IMR-90 (cell line): ENCODE measurements at regions of chr10 and their contacts with region 1.

Region 1: GRCh38 chr10:31886885-31887284 is 41.7 kb downstream of the ARHGAP12 start:
- DNase-seq: peak; percentile 81
- ATAC-seq: peak; percentile 92
- H3K4me3 ChIP-seq: no peak overlapping the region
- H3K27ac ChIP-seq: no peak overlapping the region
- H3K4me1 ChIP-seq: peaks cover 12% of the 10 kb centered on the region
- H3K27me3 ChIP-seq: no peaks in the 10 kb centered on the region
- CTCF ChIP-seq: no peak
- POLR2A ChIP-seq: no peak
- RAD21 ChIP-seq: no peak

Region 2: DNA sequence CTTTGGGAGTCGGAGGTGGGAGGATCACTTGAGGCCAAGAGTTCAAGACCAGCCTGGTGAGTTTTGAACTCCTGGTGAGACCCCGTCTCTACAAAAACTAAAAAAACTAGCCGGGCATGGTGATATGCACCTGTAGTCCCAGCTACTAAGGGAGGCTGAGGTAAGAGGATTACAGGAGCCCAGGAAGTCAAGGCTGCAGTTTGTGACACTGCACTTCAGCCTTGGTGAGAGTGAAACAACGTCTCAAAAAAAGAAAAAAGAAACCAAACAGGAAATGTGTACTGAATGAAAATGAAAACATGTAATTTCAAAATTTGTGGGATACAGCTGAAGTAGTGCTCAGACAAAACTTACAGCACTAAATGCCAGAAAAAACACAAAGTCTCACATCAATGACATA is 34.1 kb after region 1 on chr10:
- CTCF ChIA-PET with region 1: no interaction called
- POLR2A ChIA-PET with region 1: no interaction called
- dilution Hi-C with region 1: no loop called
- in situ Hi-C with region 1: no loop called
- intact Hi-C with region 1: loop called (anchors 5 kb)
- DNase-seq: no peak
- ATAC-seq: no peak
- H3K4me3 ChIP-seq: no peak overlapping the region
- H3K27ac ChIP-seq: no peak overlapping the region
- H3K4me1 ChIP-seq: peaks cover 2% of the 10 kb centered on the region; the same call in 1 of the 2 replicates
- H3K27me3 ChIP-seq: no peaks in the 10 kb centered on the region
- CTCF ChIP-seq: no peak
- POLR2A ChIP-seq: no peak
- RAD21 ChIP-seq: no peak

Region 3: GRCh38 chr10:32104622-32105509 is 218.0 kb after region 1 on chr10:
- CTCF ChIA-PET with region 1: no interaction called
- POLR2A ChIA-PET with region 1: no interaction called
- dilution Hi-C with region 1: no loop called
- in situ Hi-C with region 1: no loop called
- intact Hi-C with region 1: no loop called
- DNase-seq: peak; percentile 16
- ATAC-seq: no peak
- H3K4me3 ChIP-seq: no peak overlapping the region
- H3K27ac ChIP-seq: no peak overlapping the region
- H3K4me1 ChIP-seq: no peaks in the 10 kb centered on the region
- H3K27me3 ChIP-seq: peaks cover 5% of the 10 kb centered on the region
- CTCF ChIP-seq: no peak
- POLR2A ChIP-seq: no peak
- RAD21 ChIP-seq: no peak

Region 4: DNA sequence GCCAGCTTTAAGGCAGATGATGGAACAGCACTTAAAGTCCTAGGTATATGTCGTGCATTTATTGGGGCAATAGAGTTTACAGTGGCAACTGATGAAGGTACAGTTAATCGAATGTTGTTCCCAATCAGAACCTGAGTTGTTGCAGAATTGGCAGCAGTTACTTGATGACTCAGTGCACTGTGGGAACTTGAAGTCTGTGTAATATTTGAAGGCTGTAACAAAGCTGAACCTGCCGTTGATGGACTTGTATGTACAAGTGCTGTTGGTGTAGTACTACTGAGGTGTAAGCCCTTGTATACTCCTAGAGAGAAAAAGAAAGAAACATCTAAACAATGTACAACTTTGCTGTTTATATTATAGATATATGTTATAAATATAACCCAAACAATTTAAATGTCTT is 384.7 kb after region 1 on chr10:
- CTCF ChIA-PET with region 1: no interaction called
- POLR2A ChIA-PET with region 1: no interaction called
- dilution Hi-C with region 1: no loop called
- in situ Hi-C with region 1: no loop called
- intact Hi-C with region 1: no loop called
- DNase-seq: peak; percentile 64
- ATAC-seq: no peak
- H3K4me3 ChIP-seq: no peak overlapping the region
- H3K27ac ChIP-seq: no peak overlapping the region
- H3K4me1 ChIP-seq: peaks cover 2% of the 10 kb centered on the region; the same call in 1 of the 2 replicates
- H3K27me3 ChIP-seq: no peaks in the 10 kb centered on the region
- CTCF ChIP-seq: no peak
- POLR2A ChIP-seq: no peak
- RAD21 ChIP-seq: no peak